GM12878 (cell line): ENCODE measurements at regions of chr10 and their contacts with region 1.

Region 1: DNA sequence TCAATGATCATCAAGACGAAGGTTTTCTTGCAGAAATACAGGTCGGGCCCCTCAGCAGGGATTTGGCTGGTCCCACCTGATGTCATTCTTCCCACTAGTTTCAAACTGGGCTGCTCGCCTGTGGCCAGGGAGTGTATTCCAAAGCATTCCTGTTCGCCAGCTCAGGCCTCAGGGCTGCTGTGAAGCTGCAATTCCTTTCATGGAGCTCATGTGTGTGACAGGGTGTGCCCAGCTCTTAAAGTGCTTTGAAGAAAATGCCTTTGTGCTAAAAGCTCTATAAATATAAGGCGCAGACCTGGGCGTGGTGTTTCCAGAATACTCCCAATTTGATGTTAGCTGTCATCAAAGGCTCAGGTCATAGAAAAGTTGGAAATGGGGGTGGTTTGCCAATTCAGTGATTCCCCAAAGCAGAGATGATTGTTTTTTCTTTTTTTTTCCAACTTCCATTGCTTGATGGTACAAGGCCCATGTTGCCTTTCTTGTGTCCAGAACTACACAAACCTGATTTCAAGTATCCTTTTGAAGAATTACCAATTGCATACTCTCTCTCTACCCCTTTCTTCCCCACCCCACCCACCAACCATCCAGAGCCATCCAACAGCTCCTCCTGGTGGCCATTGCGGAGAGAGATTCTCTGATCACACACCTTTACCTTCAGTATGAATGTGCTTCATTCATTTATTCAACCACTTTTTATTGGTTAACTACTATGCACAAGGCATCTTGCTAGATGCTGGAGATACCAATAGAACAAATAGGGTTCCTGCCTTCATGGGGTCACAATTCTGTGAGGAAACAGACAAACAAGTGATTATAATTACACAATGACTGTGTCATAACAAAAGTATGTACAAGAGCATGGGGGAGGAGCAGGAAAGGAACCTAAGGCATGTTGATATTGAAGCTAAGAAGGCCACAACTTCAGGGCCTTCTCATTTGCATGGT is 297.3 kb upstream of the LYZL1 start:
- DNase-seq: no peak
- ATAC-seq: peak; percentile 80
- H3K4me3 ChIP-seq: no peak overlapping the region
- H3K27ac ChIP-seq: no peak overlapping the region
- H3K4me1 ChIP-seq: no peaks in the 10 kb centered on the region
- H3K27me3 ChIP-seq: no peaks in the 10 kb centered on the region
- CTCF ChIP-seq: peak; percentile 57 to 67 (median 64); a peak in 5 of 6 replicates
- EP300 ChIP-seq: no peak
- POLR2A ChIP-seq: no peak
- RAD21 ChIP-seq: peak; percentile 75

Region 2: DNA sequence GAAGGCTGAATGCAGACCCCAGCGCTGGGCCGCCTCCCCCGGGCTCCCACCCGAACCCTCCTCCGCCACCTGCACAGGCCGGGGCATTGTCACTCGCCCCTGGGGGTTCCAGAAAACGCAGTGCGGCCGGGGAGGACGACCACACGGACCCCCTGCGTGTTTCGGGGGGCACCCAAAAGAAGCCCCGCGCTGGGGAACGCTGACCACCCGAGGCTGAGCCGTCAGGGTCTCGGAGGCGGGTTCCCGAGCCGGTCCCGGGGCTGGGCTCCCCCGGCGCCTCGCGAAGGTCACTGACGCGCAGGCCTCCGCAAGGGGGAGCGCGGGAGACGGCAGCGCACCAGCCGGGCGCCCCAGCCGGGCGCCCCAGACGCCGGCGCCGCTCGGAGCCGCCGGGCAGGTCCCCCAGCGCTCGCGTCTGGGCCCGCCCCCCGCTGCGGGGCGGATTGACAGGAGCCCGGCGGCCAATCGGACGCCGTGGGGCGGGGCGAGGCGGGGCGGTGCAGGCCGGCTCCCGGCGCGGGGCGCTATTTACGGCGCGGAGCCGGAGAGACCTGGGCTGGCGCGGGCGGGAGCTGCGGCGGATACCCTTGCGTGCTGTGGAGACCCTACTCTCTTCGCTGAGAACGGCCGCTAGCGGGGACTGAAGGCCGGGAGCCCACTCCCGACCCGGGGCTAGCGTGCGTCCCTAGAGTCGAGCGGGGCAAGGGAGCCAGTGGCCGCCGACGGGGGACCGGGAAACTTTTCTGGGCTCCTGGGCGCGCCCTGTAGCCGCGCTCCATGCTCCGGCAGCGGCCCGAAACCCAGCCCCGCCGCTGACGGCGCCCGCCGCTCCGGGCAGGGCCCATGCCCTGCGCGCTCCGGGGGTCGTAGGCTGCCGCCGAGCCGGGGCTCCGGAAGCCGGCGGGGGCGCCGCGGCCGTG is 314.4 kb before region 1 on chr10 and contains the start of gene BAMBI:
- CTCF ChIA-PET with region 1: interaction called, 5 read pairs
- POLR2A ChIA-PET with region 1: no interaction called
- RAD21 ChIA-PET with region 1: interaction called, 3 read pairs
- SMC1A ChIA-PET with region 1: no interaction called
- in situ Hi-C with region 1: no loop called
- intact Hi-C with region 1: loop called (anchors 5 kb)
- DNase-seq: no peak
- ATAC-seq: peak; percentile 100
- H3K4me3 ChIP-seq: peak within 1 kb of the TSS; percentile 5; the same call in 1 of the 2 replicates
- H3K27ac ChIP-seq: no peak within 1 kb of the TSS
- H3K4me1 ChIP-seq: no peaks in the 10 kb centered on the region; the same call in 1 of the 2 replicates
- H3K27me3 ChIP-seq: peaks cover 15 to 29% of the 10 kb centered on the region in 2 experiments
- CTCF ChIP-seq: peak; percentile 42 to 67 (median 59)
- EP300 ChIP-seq: no peak
- POLR2A ChIP-seq: peak; percentile 75; the same call in 1 of the 2 replicates
- RAD21 ChIP-seq: peak; percentile 54; the same call in 1 of the 2 replicates
- polyA plus RNA-seq, gene BAMBI: not detected

Region 3: DNA sequence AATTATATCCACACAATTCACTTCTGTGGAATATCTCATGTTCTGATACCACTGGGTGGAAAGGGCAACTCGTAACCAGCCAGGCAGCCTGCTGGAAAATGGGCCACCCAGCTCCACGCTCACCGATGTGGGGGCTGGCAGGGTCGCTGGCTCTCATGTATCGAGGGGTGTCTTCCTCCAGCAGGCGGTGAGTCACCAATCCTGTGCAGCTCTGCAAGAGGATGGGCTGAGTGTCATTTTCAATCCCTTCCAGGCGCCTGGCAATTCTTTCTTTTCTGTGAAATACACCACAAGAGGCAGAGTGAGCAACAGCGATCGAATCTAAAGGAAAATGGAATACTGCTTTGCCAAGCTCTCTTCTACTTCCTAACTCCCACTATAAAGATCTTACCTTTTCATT is 563.1 kb after region 1 on chr10:
- CTCF ChIA-PET with region 1: no interaction called
- POLR2A ChIA-PET with region 1: no interaction called
- RAD21 ChIA-PET with region 1: no interaction called
- SMC1A ChIA-PET with region 1: no interaction called
- in situ Hi-C with region 1: no loop called
- intact Hi-C with region 1: no loop called
- DNase-seq: no peak
- ATAC-seq: no peak
- H3K4me3 ChIP-seq: no peak overlapping the region
- H3K27ac ChIP-seq: no peak overlapping the region
- H3K4me1 ChIP-seq: no peaks in the 10 kb centered on the region
- H3K27me3 ChIP-seq: no peaks in the 10 kb centered on the region
- CTCF ChIP-seq: no peak
- EP300 ChIP-seq: no peak
- POLR2A ChIP-seq: no peak
- RAD21 ChIP-seq: no peak